Upper lobe of right lung (tissue), 1 donor: ENCODE measurements at regions of chr16 and their contacts with region 1.

Region 1: GRCh38 chr16:85114909-85115567 is 2.8 kb upstream of the CIBAR2 start:
- DNase-seq: peak; percentile 94
- ATAC-seq: peak; percentile 95
- H3K4me3 ChIP-seq: no peak overlapping the region
- H3K27ac ChIP-seq: no peak overlapping the region
- H3K4me1 ChIP-seq: peaks cover 8% of the 10 kb centered on the region
- H3K27me3 ChIP-seq: no peaks in the 10 kb centered on the region
- CTCF ChIP-seq: peak; percentile 95

Region 2: DNA sequence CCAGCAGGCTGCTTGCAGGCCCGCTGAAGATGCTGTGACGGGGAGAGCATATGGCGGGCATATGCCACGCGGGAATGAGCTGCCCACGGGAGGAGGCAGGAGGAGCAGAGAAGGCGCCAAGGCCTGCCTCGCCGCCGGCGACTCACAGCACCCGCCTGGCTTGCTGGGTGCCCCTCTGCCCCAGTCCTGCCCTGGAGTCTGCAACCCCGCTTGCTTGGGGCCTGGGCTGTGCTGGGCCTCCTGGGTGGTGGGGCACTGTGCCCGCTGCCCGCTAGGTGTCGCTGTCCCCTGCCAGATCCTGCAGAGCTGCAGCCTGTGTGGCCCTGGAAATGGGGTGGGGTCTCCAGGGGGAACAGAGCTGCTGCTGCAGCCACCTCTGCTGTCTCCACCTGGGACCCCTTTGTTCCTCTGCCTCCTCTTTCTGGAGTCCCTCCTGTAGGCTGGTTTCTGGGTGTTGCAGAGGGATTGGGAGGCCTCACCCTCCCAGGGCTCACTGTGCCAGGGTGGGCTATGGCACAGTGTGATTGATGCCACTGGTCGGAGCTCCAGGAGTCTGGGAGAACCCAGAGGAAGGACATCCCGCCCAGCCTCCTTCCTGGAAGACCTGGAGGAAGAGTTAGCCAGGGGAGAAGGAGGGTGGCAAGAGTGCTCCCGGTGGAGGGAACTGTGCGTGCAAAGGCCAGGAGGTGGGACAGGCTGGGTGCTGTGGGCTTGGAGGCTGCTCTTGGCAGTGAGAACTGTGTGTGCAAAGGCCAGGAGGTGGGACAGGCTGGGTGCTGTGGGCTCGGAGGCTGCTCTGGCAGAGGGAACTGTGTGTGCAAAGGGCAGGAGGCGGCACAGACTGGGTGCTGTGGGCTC is 138.3 kb after region 1 on chr16:
- intact Hi-C with region 1: loop called (anchors 10 kb)
- DNase-seq: peak; percentile 82
- ATAC-seq: peak; percentile 80
- H3K4me3 ChIP-seq: no peak overlapping the region
- H3K27ac ChIP-seq: no peak overlapping the region
- H3K4me1 ChIP-seq: no peaks in the 10 kb centered on the region
- H3K27me3 ChIP-seq: no peaks in the 10 kb centered on the region
- CTCF ChIP-seq: peak; percentile 92